Naive thymus-derived CD8-positive, alpha-beta T cell (primary cell): ENCODE measurements at regions of chr17 and their contacts with region 1.

Region 1: GRCh38 chr17:4143563-4144421 is 795 bp downstream of the CYB5D2 start:
- DNase-seq: peak; percentile 85 to 96 (median 91)
- ATAC-seq: peak; percentile 75 to 76
- H3K4me3 Mint-ChIP-seq: peak overlapping the region; percentile 98 to 100 (median 99)
- H3K27ac Mint-ChIP-seq: peak overlapping the region; percentile 99 to 100 (median 100)
- H3K4me1 Mint-ChIP-seq: peaks cover 19 to 50% (median 43%) of the 10 kb centered on the region in 4 donors
- H3K27me3 Mint-ChIP-seq: no peaks in the 10 kb centered on the region

Region 2: DNA sequence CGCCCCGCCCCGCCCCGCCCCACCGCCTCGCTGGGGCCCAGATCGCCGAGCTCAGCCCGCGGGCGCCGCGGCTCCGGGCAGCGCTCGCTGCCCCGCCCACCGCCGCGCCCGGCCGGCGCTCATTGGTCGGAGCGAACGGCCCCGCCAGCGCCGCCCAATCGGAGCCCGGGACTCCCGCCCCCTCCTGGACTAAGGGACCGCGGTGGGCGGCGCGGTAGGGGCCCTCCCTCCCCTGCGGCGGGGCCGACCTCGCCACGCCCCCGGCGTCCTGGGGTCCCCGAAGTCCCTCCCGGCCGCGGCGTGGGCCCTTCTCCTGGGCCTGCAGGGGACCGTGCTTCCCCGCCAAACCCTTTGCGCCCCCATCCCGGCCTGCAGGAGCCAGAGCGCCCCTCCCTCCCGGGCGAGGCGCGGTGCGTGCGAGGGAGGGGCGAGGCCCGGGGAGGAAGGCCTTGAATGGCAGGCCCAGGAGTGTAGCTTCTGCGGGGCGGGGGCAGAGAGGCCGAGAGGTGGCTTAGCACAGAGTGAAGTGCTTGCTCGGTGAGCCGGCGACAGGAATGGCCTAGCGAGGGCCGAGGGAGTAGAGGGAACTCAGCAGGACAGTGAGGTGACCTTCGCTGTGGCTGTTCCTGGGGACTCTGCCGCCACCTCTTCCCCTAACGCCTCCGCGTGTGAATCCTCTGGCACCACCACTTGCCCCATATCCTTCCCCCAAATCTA is 250.6 kb before region 1 on chr17 and contains the start of gene CAMKK1:
- POLR2A ChIA-PET with region 1: interaction called, 10 read pairs
- DNase-seq: peak; percentile 77 to 91 (median 85)
- ATAC-seq: peak; percentile 68 to 81
- H3K4me3 Mint-ChIP-seq: peak within 1 kb of the TSS; percentile 75 to 92 (median 86)
- H3K27ac Mint-ChIP-seq: peak within 1 kb of the TSS; percentile 74 to 95 (median 91)
- H3K4me1 Mint-ChIP-seq: peaks cover 19 to 47% (median 36%) of the 10 kb centered on the region in 4 donors
- H3K27me3 Mint-ChIP-seq: no peaks in the 10 kb centered on the region
- polyA plus RNA-seq, gene CAMKK1: 0.33 to 1.5 (median 0.77) TPM

Region 3: DNA sequence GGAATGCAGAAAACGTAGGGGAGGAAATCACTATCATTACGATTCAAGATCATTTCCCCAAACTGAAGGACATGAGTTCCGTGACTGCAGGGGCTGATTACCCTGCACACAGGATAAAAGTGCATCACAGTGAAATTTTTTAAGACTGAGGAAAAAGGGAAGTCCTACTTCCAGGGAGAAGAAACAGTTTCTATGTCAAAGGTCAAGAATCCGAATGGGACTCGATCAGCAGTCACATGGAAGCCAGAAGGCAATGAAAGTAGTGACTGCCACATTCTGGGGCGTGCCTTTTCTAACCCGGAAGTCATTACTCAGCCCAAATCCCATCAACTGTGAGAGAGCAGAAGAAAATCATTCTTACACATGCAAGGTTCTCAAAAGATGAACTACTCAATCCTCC is 13.1 kb before region 1 on chr17:
- POLR2A ChIA-PET with region 1: interaction called, 12 read pairs
- DNase-seq: no peak
- ATAC-seq: no peak
- H3K4me3 Mint-ChIP-seq: no peak overlapping the region
- H3K27ac Mint-ChIP-seq: peak overlapping the region in 5 of 10 donors; percentile 12 to 31 (median 22)
- H3K4me1 Mint-ChIP-seq: peaks cover 28 to 66% (median 62%) of the 10 kb centered on the region in 4 donors
- H3K27me3 Mint-ChIP-seq: no peaks in the 10 kb centered on the region

Region 4: DNA sequence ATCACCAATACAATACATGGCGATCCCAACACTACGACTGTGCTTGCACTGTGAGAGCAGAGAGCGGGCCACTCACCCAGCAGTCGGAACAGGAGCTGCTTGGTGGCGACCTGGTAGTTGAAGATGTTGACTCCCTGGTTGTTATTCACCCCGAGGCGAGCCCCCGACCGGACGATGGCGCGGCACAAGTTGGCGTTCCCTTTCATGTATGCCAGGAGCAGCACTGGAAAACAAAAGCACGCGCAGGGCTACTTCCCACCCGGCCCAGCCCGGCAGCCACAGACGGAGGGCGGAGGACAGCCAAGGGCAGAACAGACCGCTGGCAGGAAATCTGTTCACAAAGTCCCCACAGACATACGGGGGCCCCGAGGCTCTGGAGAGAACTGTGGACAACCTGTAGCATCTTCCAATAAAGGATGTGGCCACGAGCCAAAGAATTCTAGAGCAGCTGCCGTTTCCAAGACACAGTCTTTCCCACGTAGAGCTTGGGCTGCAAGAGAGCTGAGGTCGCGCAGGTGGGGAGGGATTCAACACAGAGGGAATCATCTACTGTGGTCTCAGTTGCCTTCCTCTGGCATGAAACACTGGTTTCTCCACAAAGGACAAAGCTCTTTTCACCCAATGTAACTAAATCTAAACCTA is 27.0 kb after region 1 on chr17:
- POLR2A ChIA-PET with region 1: interaction called, 117 read pairs
- DNase-seq: no peak
- ATAC-seq: no peak
- H3K4me3 Mint-ChIP-seq: no peak overlapping the region
- H3K27ac Mint-ChIP-seq: peak overlapping the region in 7 of 10 donors; percentile 25 to 81 (median 62)
- H3K4me1 Mint-ChIP-seq: peaks cover 18 to 58% (median 26%) of the 10 kb centered on the region in 4 donors
- H3K27me3 Mint-ChIP-seq: no peaks in the 10 kb centered on the region

Region 5: GRCh38 chr17:4189280-4189679 is 45.5 kb after region 1 on chr17:
- POLR2A ChIA-PET with region 1: no interaction called
- DNase-seq: no peak
- ATAC-seq: peak; percentile 37 to 64
- H3K4me3 Mint-ChIP-seq: peak overlapping the region in 3 of 10 donors; percentile 31 to 46 (median 32)
- H3K27ac Mint-ChIP-seq: peak overlapping the region; percentile 76 to 93 (median 88)
- H3K4me1 Mint-ChIP-seq: peaks cover 4 to 9% (median 7%) of the 10 kb centered on the region in 4 donors
- H3K27me3 Mint-ChIP-seq: no peaks in the 10 kb centered on the region

Region 6: DNA sequence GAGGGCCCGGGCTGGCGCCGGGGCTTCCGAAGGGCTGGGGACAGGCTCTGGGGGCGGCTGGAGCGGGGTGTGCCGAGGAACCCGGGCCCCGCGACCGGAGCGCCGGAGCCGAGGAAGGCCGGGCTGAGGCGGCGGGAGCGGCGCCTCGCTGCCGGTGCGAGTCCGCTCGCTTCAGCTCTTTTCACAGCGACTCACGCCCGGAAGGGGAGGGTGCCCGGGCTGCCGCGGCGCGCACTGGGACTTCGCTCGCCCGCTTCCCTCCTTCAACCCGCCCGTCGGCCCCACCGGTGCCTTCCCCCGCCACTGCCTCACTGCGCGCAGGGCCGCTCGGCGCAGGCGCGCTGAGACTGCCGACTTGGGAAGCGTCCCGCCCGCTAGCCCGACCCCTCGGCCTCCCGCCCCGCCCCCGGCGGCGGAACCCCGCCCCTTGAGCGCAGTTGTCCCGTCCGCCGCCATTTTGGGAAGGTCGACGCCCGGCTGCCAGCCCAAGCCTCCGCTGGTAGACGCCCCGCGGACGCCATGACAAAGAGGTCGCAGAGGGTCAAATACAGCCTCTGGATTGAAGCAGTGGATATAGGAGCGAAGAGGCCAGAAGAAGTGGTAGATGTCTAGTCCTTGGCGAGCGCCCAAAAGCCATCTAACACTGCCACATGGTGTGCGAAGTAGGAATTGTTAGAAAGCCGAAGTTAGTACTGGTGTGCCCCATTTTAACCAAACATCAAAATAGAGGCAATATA is 222.7 kb after region 1 on chr17 and contains the start of gene UBE2G1:
- POLR2A ChIA-PET with region 1: interaction called, 18 read pairs
- DNase-seq: peak; percentile 96 to 100 (median 99)
- ATAC-seq: peak; percentile 82 to 85
- H3K4me3 Mint-ChIP-seq: peak within 1 kb of the TSS; percentile 78 to 96 (median 90)
- H3K27ac Mint-ChIP-seq: peak within 1 kb of the TSS; percentile 94 to 99 (median 98)
- H3K4me1 Mint-ChIP-seq: peaks cover 11 to 37% (median 31%) of the 10 kb centered on the region in 4 donors
- H3K27me3 Mint-ChIP-seq: no peaks in the 10 kb centered on the region
- polyA plus RNA-seq, gene UBE2G1: 42.7 to 56.5 (median 50.4) TPM